ENCODE measurements at regions of chr4 and their contacts with region 1.

Region 1: GRCh38 chr4:163391756-163392155 is 48.1 kb downstream of the NPY5R start:
- DNase-seq: no peak
- H3K4me3 ChIP-seq: no peak overlapping the region
- H3K27ac ChIP-seq: no peak overlapping the region
- H3K4me1 ChIP-seq: no peaks in the 10 kb centered on the region
- H3K27me3 ChIP-seq: no peaks in the 10 kb centered on the region
- CTCF ChIP-seq: no peak
- POLR2A ChIP-seq: no peak

Region 2: GRCh38 chr4:162952232-162952631 is 439.5 kb before region 1 on chr4:
- intact Hi-C with region 1: no loop called
- DNase-seq: no peak
- H3K4me3 ChIP-seq: no peak overlapping the region
- H3K27ac ChIP-seq: no peak overlapping the region
- H3K4me1 ChIP-seq: no peaks in the 10 kb centered on the region
- H3K27me3 ChIP-seq: no peaks in the 10 kb centered on the region
- CTCF ChIP-seq: no peak
- POLR2A ChIP-seq: no peak

Region 3: GRCh38 chr4:163367651-163368050 is 24.1 kb before region 1 on chr4:
- intact Hi-C with region 1: no loop called
- DNase-seq: no peak
- H3K4me3 ChIP-seq: no peak overlapping the region
- H3K27ac ChIP-seq: no peak overlapping the region
- H3K4me1 ChIP-seq: no peaks in the 10 kb centered on the region
- H3K27me3 ChIP-seq: no peaks in the 10 kb centered on the region
- CTCF ChIP-seq: no peak
- POLR2A ChIP-seq: no peak

Region 4: DNA sequence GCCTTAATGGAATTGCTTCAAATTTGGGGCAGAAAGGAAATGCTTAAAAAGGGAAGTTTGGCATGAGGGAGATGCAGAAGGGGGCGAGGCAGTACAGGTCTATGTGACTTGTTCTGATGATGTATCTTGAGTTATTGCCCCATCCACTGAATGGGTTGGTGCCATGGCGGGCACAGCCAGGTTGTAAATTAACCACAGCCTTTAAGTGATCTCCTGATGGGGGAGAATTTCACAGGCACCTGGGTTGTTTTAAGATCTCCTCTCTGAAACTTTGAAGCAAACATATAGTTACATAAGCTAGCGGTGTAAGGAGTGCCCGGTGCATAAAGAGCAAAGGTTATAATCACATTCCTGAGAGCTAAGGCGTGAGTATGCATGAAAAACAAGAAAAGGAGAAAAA is 11.1 kb before region 1 on chr4:
- intact Hi-C with region 1: loop called (anchors 1 kb)
- DNase-seq: no peak
- H3K4me3 ChIP-seq: no peak overlapping the region
- H3K27ac ChIP-seq: no peak overlapping the region
- H3K4me1 ChIP-seq: no peaks in the 10 kb centered on the region
- H3K27me3 ChIP-seq: no peaks in the 10 kb centered on the region
- CTCF ChIP-seq: no peak
- POLR2A ChIP-seq: no peak